Heart right ventricle (tissue), 16 donors: ENCODE measurements at regions of chr17 and their contacts with region 1.

Region 1: GRCh38 chr17:70622368-70623260 is 453.3 kb downstream of the KCNJ2 start:
- DNase-seq: peak; percentile 37 to 50
- ATAC-seq: peak in 7 of 8 donors; percentile 55 to 84 (median 71)
- H3K4me3 ChIP-seq: peak overlapping the region in 2 of 10 donors; percentile 2 to 7
- H3K27ac ChIP-seq: no peak overlapping the region
- H3K4me1 ChIP-seq: peaks cover 0 to 14% (median 4%) of the 10 kb centered on the region in 9 donors
- H3K27me3 ChIP-seq: no peaks in the 10 kb centered on the region
- CTCF ChIP-seq: peak; percentile 7 to 66 (median 57)

Region 2: GRCh38 chr17:69523244-69523861 is 1099.3 kb before region 1 on chr17:
- intact Hi-C with region 1: loop called in 5 of 10 experiments (anchors 2 to 10 kb)
- DNase-seq: peak in 1 of 2 donors; percentile 21
- ATAC-seq: peak in 5 of 8 donors; percentile 61 to 75 (median 65)
- H3K4me3 ChIP-seq: peak overlapping the region in 1 of 10 donors; percentile 6
- H3K27ac ChIP-seq: no peak overlapping the region
- H3K4me1 ChIP-seq: peaks cover 0 to 6% (median 0%) of the 10 kb centered on the region in 9 donors
- H3K27me3 ChIP-seq: no peaks in the 10 kb centered on the region
- CTCF ChIP-seq: peak; percentile 48 to 73 (median 69)

Region 3: GRCh38 chr17:69575346-69575761 is 1047.3 kb before region 1 on chr17:
- intact Hi-C with region 1: loop called in 1 of 10 experiments (anchors 10 kb)
- DNase-seq: peak in 1 of 2 donors; percentile 15
- ATAC-seq: peak in 7 of 8 donors; percentile 29 to 81 (median 66)
- H3K4me3 ChIP-seq: no peak overlapping the region
- H3K27ac ChIP-seq: peak overlapping the region in 9 of 10 donors; percentile 1 to 54 (median 29)
- H3K4me1 ChIP-seq: peaks cover 0 to 29% (median 19%) of the 10 kb centered on the region in 9 donors
- H3K27me3 ChIP-seq: no peaks in the 10 kb centered on the region
- CTCF ChIP-seq: no peak

Region 4: DNA sequence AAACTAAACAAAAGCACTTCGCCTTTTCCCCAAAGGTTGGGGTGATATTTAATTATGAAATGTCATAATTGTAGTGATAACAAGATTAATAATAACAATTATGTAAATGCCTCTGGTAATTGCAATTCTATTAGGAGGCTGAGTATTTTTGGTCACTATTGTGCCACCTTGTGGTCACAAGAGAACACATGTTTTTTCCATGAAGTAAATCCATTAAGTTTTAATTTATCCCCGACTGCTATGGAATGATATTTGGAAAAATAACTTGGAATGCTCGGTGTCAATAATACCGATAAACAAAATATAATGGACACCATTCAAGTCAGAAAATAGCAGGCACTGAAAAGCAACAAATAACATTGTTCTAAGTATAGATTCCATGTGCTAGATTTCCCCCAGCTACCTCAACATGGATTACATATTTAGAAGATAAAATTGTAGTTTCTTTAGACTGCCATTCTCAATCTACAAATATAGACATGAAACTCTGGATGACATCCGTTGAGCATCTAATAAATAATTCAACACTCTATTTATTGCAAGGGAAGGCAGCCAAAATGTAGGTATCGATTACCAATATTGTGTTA is 478.3 kb before region 1 on chr17:
- intact Hi-C with region 1: loop called in 1 of 10 experiments (anchors 10 kb)
- DNase-seq: no peak
- ATAC-seq: peak in 1 of 8 donors; percentile 44
- H3K4me3 ChIP-seq: no peak overlapping the region
- H3K27ac ChIP-seq: no peak overlapping the region
- H3K4me1 ChIP-seq: peaks cover 0 to 7% (median 0%) of the 10 kb centered on the region in 9 donors
- H3K27me3 ChIP-seq: no peaks in the 10 kb centered on the region
- CTCF ChIP-seq: peak; percentile 45 to 86 (median 76)

Region 5: DNA sequence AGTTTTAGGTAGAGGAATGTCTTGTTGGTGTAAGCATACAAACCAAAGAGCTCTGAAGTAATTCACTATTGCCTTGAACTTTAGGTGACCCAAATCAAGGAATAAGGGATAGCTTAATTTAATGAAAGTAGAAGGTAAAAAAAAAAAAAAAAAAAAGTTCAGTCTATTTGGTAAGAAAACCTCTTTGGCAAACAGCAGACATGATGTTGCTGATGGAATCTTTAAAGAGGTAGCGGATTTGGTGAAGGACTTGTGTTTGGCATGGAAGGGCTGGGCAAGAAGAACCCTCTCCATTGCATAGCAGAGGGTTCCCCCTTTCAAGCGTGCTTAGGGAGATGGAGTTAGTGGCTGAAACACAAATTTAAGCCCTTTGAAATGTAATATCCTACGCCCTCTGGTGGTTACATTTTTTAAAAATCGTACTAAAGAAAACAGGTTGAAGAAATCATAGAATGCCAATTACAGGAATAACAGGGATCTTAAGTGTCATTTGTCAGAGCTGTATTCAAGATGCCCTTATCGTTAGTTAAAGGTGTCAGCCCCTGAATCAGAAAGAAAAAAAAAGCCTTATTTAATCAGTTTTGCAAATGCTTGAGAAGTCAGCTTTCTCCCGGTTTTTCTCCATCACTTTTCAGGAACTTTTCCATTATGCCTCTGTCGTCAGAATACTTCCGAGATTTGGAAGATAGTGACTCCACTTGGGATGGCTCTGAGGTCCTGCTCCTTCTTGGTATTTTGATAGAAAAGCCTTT is 70.2 kb before region 1 on chr17:
- intact Hi-C with region 1: loop called in 2 of 10 experiments (anchors 5 to 10 kb)
- DNase-seq: peak in 1 of 2 donors; percentile 8
- ATAC-seq: peak; percentile 55 to 83 (median 66)
- H3K4me3 ChIP-seq: peak overlapping the region in 3 of 10 donors; percentile 8 to 22 (median 20)
- H3K27ac ChIP-seq: peak overlapping the region in 2 of 10 donors; percentile 10 to 29
- H3K4me1 ChIP-seq: peaks cover 0 to 4% (median 0%) of the 10 kb centered on the region in 9 donors
- H3K27me3 ChIP-seq: no peaks in the 10 kb centered on the region
- CTCF ChIP-seq: peak; percentile 34 to 72 (median 60)